Transverse colon (tissue), 4 donors: ENCODE measurements at regions of chr10 and their contacts with region 1.

Region 1: GRCh38 chr10:97278491-97278989 is 13.9 kb downstream of the ARHGAP19 start:
- DNase-seq: no peak
- H3K4me3 ChIP-seq: no peak overlapping the region
- H3K27ac ChIP-seq: peak overlapping the region in 3 of 4 donors; percentile 31 to 61 (median 33)
- H3K4me1 ChIP-seq: peaks cover 5 to 28% (median 11%) of the 10 kb centered on the region in 4 donors
- H3K27me3 ChIP-seq: no peaks in the 10 kb centered on the region
- CTCF ChIP-seq: peak; percentile 66 to 76 (median 68)
- EP300 ChIP-seq: no peak
- POLR2A ChIP-seq: no peak

Region 2: DNA sequence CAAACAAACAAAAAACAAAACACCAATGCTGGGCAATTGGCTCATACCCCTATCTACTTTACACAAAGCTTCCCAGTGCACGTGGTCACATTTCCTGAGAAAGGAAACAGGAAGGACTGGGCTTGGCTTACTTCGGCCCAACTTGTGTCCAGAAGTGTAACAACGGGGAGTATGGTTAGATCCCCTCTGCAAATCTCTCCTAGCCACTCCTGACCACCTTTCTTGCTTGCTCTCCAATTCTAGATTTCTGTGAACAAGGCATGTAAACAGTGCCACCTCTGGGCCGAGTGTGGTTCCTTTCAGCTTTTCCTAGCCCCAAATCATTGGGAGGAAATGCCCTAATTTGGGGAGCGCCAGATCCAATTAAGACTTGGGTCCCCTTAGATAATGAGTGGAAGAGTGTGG is 77.0 kb after region 1 on chr10:
- in situ Hi-C with region 1: loop called in 2 of 4 experiments (anchors 10 kb)
- intact Hi-C with region 1: loop called (anchors 5 kb)
- DNase-seq: peak; percentile 36
- H3K4me3 ChIP-seq: no peak overlapping the region
- H3K27ac ChIP-seq: no peak overlapping the region
- H3K4me1 ChIP-seq: peaks cover 0 to 1% (median 0%) of the 10 kb centered on the region in 4 donors
- H3K27me3 ChIP-seq: no peaks in the 10 kb centered on the region
- CTCF ChIP-seq: peak; percentile 39 to 54 (median 47)
- EP300 ChIP-seq: no peak
- POLR2A ChIP-seq: no peak